CD8-positive, alpha-beta T cell (primary cell): ENCODE measurements at regions of chr11 and their contacts with region 1.

Region 1: DNA sequence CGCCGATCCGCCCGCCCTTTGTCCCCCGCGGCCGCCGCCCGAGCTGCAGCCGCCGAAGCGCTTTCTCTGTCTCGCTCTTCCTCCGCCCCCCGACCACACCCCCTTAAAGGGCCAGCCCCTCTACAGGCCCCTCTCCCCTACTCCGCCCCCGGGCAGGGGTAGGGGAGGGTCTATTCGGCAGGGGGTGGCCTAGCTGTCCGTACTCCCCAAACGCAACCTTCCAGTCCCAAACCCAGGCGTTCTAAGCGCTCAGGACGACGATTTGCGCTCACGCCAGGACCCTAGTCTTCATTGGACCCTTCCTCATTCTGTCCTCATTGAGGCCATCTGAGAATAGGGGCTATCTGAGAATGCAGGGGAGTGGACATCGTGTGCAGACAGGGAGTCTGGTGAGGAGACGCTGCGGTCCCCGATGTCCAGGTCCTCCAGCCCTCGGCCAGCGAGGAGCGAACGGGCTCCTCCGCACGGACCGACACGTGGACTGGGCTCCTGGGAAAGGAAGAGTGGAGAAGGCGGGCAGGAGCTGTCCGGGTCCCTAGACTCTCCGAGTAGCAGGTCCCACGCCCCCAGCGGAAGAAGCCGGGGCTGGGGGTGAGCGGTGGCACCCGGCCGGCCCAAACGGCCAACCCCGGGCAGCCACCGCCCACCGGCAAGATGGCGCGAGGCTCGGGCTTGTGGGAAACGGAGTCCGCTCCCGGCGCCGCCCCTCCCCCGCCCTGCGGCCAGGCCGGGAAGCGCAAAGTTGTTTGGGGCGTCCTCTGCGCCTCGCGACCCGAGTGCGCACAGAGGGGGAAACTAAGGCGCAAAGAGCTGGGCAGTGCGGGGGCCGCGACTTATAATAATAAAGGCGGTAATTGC is at the start of gene PPP1R14B:
- DNase-seq: peak; percentile 48 to 83 (median 81)
- ATAC-seq: peak; percentile 58
- H3K4me3 ChIP-seq: peak within 1 kb of the TSS; percentile 75 to 98
- H3K4me3 Mint-ChIP-seq: peak within 1 kb of the TSS; percentile 85
- H3K27ac ChIP-seq: peak within 1 kb of the TSS; percentile 35 to 42
- H3K27ac Mint-ChIP-seq: peak within 1 kb of the TSS; percentile 82
- H3K4me1 ChIP-seq: peaks cover 41% of the 10 kb centered on the region
- H3K4me1 Mint-ChIP-seq: peaks cover 44% of the 10 kb centered on the region
- H3K27me3 ChIP-seq: no peaks in the 10 kb centered on the region
- H3K27me3 Mint-ChIP-seq: no peaks in the 10 kb centered on the region
- CTCF ChIP-seq: no peak
- total RNA-seq, gene PPP1R14B: 25.7 to 30.8 TPM

Region 2: DNA sequence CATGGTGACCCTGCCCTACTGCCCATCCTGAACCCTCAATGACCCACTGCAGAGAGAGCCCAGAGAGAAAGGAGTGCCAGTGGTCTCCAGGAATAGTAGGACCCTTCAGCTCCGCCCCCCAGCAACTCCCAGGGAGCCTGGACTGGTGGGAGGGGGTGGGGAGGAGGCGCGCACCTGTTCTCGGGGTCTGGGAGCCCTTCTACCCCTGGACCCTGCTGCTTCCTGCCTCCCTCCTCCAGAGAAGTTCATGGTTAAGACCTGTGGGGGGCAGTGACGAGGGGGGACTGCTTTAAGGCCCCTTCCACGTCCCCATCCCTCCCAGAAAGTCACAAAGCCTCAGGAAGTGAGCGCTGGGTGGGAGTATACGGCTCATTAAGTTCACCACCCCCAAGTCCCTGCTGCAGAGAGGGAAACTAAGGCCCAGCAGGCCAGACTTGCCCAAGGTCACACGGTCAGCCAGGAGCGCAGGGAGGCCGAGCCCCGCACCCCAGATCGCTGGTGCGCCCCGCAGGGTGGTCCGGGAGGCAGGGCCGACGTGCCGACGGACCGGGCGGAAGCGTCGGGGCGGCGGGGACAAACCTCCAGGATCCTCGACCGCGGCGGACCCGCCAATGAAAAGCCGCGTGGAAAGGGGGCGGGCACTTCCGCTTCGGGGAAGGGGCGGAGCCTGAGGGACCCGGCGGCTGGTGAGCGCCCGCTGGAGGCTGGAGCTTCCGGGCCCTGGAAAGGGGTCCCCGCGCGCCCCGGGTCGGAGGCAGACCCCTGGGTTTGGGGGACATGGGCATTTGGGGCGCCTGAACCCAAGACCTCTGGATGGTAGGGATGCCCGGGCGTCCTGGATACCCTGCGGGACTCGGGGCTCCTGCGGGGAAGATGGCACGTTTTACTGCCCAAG is 21.2 kb before region 1 on chr11 and contains the starts of genes NUDT22 and TRPT1:
- CTCF ChIA-PET with region 1: interaction called, 17 read pairs
- POLR2A ChIA-PET with region 1: interaction called, 47 read pairs
- intact Hi-C with region 1: loop called in 1 of 2 experiments (anchors 2 kb)
- DNase-seq: peak; percentile 75 to 96 (median 93)
- ATAC-seq: peak; percentile 65
- H3K4me3 ChIP-seq: peak within 1 kb of the TSS; percentile 76 to 100
- H3K4me3 Mint-ChIP-seq: peak within 1 kb of the TSS; percentile 93
- H3K27ac ChIP-seq: peak within 1 kb of the TSS; percentile 85 to 88
- H3K27ac Mint-ChIP-seq: peak within 1 kb of the TSS; percentile 91
- H3K4me1 ChIP-seq: peaks cover 41% of the 10 kb centered on the region
- H3K4me1 Mint-ChIP-seq: peaks cover 30% of the 10 kb centered on the region
- H3K27me3 ChIP-seq: no peaks in the 10 kb centered on the region
- H3K27me3 Mint-ChIP-seq: no peaks in the 10 kb centered on the region
- CTCF ChIP-seq: peak; percentile 58
- total RNA-seq, gene NUDT22: 20.1 to 23.6 TPM
- total RNA-seq, gene TRPT1: 12.3 to 14.3 TPM

Region 3: GRCh38 chr11:64264371-64264852 is 17.3 kb after region 1 on chr11:
- CTCF ChIA-PET with region 1: interaction called, 50 read pairs
- POLR2A ChIA-PET with region 1: interaction called, 20 read pairs
- intact Hi-C with region 1: loop called (anchors 1 kb)
- DNase-seq: no peak
- ATAC-seq: no peak
- H3K4me3 ChIP-seq: no peak overlapping the region
- H3K4me3 Mint-ChIP-seq: no peak overlapping the region
- H3K27ac ChIP-seq: no peak overlapping the region
- H3K27ac Mint-ChIP-seq: no peak overlapping the region
- H3K4me1 ChIP-seq: peaks cover 15% of the 10 kb centered on the region
- H3K4me1 Mint-ChIP-seq: peaks cover 17% of the 10 kb centered on the region
- H3K27me3 ChIP-seq: no peaks in the 10 kb centered on the region
- H3K27me3 Mint-ChIP-seq: no peaks in the 10 kb centered on the region
- CTCF ChIP-seq: no peak

Region 4: DNA sequence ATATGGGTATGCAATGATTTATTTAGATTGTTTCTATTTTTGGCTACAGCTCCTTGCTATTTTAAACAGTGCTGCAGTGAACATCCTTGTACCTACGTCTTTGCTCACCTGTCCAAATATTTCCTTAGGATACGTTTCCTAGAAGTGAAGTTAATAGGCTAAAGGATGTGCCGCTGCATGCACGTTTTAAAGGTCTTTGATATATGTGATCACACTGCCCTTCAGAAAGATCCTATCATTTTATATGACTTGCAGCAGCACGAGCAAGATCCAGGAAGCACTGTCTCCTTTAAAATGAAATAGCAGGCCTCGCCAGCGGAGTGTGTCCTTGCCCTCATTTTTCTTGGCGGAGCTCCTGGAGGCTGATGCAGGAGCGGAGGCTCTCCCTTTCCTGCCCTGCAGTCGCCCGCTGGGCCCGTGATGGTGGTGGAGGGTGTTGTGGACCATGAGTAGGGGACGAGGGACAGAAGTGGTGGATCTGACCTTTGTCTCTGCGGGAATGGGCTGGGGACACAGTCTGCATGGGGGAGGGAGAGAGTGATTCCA is 131.3 kb after region 1 on chr11:
- CTCF ChIA-PET with region 1: no interaction called
- POLR2A ChIA-PET with region 1: no interaction called
- intact Hi-C with region 1: no loop called
- DNase-seq: no peak
- ATAC-seq: no peak
- H3K4me3 ChIP-seq: no peak overlapping the region
- H3K4me3 Mint-ChIP-seq: no peak overlapping the region
- H3K27ac ChIP-seq: no peak overlapping the region
- H3K27ac Mint-ChIP-seq: no peak overlapping the region
- H3K4me1 ChIP-seq: no peaks in the 10 kb centered on the region
- H3K4me1 Mint-ChIP-seq: no peaks in the 10 kb centered on the region
- H3K27me3 ChIP-seq: no peaks in the 10 kb centered on the region
- H3K27me3 Mint-ChIP-seq: no peaks in the 10 kb centered on the region
- CTCF ChIP-seq: no peak

Region 5: DNA sequence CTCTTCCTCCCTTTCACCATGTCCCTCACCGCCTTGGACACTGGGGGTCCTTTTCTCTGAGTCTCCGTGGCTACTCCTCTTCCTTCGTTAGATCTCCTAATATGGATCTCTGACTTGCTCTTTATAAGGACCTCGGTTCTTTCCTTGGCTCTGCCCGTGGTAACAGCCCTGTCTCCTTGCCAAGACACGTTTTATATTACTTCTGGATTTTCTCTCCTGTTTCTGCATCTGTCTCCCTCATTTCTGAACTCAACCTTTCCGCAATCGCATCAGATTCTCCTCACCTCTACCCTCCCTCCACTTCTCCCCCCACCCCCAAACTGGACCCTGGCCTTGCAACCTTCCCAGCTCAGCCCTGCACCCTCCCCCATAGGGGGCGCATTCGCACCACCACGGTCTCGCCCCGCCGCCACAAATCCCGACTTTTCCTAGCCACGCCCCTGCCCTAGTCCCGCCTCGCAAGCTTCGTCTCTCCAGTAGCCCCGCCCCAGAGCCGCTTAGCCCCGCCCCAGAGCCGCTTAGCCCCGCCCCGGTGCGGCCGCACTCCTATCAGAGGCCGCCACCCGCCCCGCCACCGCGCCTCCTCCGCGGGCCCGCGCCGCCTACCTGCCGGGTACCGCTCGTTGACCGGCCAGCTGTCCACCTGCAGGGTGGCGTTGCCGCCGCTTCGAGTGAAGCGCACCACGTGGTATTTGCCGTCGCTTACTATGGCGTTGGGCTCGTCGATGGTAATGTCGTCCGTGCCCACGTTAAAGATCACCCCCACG is 382.9 kb after region 1 on chr11:
- CTCF ChIA-PET with region 1: no interaction called
- POLR2A ChIA-PET with region 1: no interaction called
- intact Hi-C with region 1: no loop called
- DNase-seq: no peak
- ATAC-seq: no peak
- H3K4me3 ChIP-seq: no peak overlapping the region
- H3K4me3 Mint-ChIP-seq: no peak overlapping the region
- H3K27ac ChIP-seq: no peak overlapping the region
- H3K27ac Mint-ChIP-seq: no peak overlapping the region
- H3K4me1 ChIP-seq: peaks cover 13% of the 10 kb centered on the region
- H3K4me1 Mint-ChIP-seq: peaks cover 11% of the 10 kb centered on the region
- H3K27me3 ChIP-seq: no peaks in the 10 kb centered on the region
- H3K27me3 Mint-ChIP-seq: peaks cover 7% of the 10 kb centered on the region
- CTCF ChIP-seq: no peak